OCI-LY7 (cell line): ENCODE measurements at regions of chr20 and their contacts with region 1.

Region 1: GRCh38 chr20:13119583-13119982 is 101.5 kb upstream of the ISM1 start:
- DNase-seq: peak; percentile 53
- H3K4me3 ChIP-seq: no peak overlapping the region
- H3K27ac ChIP-seq: no peak overlapping the region
- H3K4me1 ChIP-seq: no peaks in the 10 kb centered on the region
- CTCF ChIP-seq: peak; percentile 90

Region 2: DNA sequence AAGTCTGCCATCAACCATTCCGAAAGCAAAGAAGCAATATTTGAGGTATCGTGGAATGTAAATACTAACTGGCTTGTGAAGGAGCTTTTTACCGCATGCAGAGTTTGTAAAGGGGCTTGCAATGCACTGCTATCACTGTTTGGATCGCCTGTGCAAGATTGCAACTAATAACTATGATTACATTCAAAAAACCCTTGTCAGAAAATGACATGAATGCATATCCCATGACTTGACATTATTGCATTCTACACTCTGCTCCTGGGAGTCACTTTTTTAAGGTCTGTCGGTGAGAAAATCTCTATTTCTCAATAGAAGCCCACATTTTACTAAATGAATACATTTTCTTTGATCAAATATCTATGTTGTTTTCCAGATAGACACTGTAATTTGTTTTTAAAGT is 446.2 kb before region 1 on chr20:
- CTCF ChIA-PET with region 1: no interaction called
- POLR2A ChIA-PET with region 1: no interaction called
- intact Hi-C with region 1: no loop called
- DNase-seq: no peak
- H3K4me3 ChIP-seq: no peak overlapping the region
- H3K27ac ChIP-seq: no peak overlapping the region
- H3K4me1 ChIP-seq: no peaks in the 10 kb centered on the region
- CTCF ChIP-seq: no peak

Region 3: DNA sequence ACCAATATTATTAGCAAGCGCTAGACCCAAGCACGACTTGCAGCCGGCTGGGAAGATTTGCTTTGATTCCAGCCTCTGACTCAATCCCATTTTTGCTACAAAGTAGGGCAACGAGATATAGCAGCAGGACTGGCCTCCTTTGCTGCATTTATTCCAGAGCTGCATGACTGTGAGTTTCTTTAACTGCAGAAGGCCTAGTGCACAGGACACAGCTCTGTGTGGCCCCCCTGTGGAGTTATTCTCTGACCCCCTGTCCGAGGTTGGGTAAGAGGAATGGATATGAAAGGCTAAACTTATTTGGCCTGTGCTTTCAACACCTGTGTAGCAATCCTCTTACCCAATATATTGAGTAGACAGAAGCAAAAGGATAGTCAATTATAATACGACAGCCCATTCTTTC is 244.1 kb before region 1 on chr20:
- CTCF ChIA-PET with region 1: no interaction called
- POLR2A ChIA-PET with region 1: no interaction called
- intact Hi-C with region 1: no loop called
- DNase-seq: no peak
- H3K4me3 ChIP-seq: no peak overlapping the region
- H3K27ac ChIP-seq: no peak overlapping the region
- H3K4me1 ChIP-seq: no peaks in the 10 kb centered on the region
- CTCF ChIP-seq: no peak

Region 4: DNA sequence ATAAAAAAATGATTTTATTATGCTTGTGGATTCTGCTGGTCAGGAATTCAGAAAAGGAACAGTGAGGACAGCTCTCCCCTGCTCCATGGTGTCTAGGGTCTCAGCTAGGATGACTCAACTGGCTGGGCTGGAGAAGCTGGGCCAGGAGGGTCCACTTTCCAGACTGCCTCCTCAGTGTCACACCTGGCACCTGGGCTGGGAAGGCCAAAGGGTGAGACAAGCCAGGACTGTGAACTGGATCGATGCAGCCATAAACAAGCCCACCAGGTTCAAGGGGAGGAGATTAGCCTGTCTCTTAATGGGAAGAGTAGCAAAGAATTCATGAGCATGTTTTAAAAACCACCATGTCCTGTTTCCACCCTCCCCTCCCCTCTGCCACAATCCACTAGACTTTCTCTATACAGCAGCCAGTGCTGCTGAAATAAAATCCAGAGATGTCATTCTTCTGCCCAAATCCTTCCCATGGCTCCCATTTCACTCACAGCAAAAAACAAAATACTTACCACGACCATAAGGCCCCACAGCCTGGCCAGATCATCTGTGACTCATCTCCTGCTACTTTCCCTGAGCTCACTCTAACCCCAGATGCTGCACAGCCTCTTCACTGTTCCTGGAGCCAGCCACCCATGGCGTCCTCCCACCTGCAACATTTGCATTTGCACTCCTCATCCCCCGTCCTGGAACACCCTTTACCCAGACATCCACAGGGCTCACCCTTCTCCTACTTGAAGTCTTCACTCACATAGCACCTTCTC is 97.0 kb before region 1 on chr20:
- CTCF ChIA-PET with region 1: no interaction called
- POLR2A ChIA-PET with region 1: no interaction called
- intact Hi-C with region 1: no loop called
- DNase-seq: no peak
- H3K4me3 ChIP-seq: no peak overlapping the region
- H3K27ac ChIP-seq: no peak overlapping the region
- H3K4me1 ChIP-seq: peaks cover 9% of the 10 kb centered on the region
- CTCF ChIP-seq: no peak

Region 5: DNA sequence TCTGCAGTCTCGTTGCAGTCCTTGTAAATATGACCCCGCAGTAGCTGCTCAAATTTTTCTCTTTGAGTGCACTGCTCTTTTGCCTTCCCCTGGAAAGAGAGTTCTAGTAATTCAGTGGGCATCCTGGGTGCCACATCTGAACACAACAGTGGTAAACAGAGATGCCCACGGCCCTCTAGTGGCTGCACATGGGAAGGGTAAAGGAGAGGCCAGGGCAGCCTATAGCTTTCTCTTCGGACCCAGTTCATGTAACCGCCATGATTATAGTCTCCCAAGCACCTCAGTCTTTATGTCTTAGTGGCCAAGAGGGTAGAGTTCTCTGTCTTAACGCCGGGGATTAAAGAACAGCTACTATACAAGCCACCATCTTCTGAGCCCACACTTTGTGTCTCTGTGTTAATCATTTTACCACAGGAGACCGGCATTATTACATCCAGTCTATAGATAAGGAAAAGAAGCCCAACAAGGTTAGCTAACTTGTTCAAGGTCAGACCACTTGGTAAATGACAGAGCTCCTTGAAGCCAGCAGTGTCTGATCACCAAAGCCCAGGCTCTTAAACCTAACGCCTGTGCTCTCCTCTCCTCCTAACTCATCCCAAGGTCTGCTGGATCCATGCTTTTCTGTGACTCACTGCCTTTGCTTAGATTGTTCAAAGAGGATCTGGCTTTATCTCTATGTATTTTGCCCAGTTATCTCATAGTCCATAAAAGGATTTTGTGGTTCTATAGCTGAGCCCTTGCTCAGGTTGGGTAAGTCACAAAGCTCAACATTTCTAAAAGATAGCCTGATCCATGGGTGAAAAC is 183.3 kb after region 1 on chr20:
- CTCF ChIA-PET with region 1: no interaction called
- POLR2A ChIA-PET with region 1: no interaction called
- intact Hi-C with region 1: loop called (anchors 5 kb)
- DNase-seq: peak; percentile 16
- H3K4me3 ChIP-seq: no peak overlapping the region
- H3K27ac ChIP-seq: no peak overlapping the region
- H3K4me1 ChIP-seq: no peaks in the 10 kb centered on the region
- CTCF ChIP-seq: peak; percentile 72

Region 6: GRCh38 chr20:13546497-13547131 is 427.0 kb after region 1 on chr20:
- CTCF ChIA-PET with region 1: no interaction called
- POLR2A ChIA-PET with region 1: no interaction called
- intact Hi-C with region 1: loop called (anchors 5 kb)
- DNase-seq: peak; percentile 72
- H3K4me3 ChIP-seq: no peak overlapping the region
- H3K27ac ChIP-seq: no peak overlapping the region
- H3K4me1 ChIP-seq: no peaks in the 10 kb centered on the region
- CTCF ChIP-seq: peak; percentile 94

Region 7: DNA sequence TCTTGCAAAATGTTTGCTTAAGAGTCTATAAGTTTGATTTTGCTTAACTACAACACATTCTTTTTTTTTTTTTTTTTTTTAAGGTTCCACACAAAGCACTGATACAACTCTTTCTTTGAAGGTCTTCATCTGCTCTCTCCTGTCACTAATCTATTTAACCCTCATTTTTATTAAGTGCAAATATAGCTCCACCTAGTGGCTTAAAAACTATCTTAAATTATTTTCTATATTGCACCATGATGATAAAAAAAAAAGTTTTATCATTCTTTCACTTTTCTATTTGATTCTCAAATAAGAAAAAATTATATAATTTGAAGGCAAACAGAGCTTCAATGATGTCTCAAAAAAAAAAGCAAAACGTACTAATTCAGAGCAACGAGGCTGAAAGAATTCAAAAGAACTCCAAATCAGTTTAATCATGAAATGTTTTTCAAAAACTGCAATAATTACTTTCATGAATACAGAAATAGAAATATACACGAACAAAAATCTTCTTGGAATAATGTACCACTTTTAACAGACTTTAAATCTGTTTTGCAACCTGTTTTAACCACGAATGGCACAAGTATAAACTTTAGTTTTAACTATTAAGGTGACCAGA is 652.4 kb after region 1 on chr20:
- CTCF ChIA-PET with region 1: no interaction called
- POLR2A ChIA-PET with region 1: no interaction called
- intact Hi-C with region 1: loop called (anchors 5 kb)
- DNase-seq: peak; percentile 56
- H3K4me3 ChIP-seq: no peak overlapping the region
- H3K27ac ChIP-seq: no peak overlapping the region
- H3K4me1 ChIP-seq: no peaks in the 10 kb centered on the region
- CTCF ChIP-seq: peak; percentile 86

Region 8: DNA sequence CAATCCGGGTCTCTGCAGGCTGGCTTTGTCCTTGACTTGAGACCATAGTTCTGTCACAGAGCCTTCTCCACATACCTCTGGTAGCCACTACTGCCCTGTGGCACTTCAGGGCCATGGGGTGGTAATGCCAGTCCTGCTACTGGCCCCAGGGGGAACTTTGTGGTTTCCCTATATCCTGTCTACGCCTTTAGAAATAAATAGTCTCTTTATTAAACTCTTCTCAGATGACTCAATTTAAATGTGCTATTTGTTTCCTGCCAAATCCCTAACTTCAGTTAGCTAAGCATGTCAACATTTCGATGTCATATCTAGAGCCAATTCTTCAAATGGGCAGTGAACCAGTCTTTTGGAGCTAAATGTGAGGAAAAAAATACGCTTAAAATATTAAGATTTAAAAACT is 810.7 kb after region 1 on chr20:
- CTCF ChIA-PET with region 1: no interaction called
- POLR2A ChIA-PET with region 1: no interaction called
- intact Hi-C with region 1: no loop called
- DNase-seq: no peak
- H3K4me3 ChIP-seq: no peak overlapping the region
- H3K27ac ChIP-seq: no peak overlapping the region
- H3K4me1 ChIP-seq: no peaks in the 10 kb centered on the region
- CTCF ChIP-seq: no peak

Region 9: DNA sequence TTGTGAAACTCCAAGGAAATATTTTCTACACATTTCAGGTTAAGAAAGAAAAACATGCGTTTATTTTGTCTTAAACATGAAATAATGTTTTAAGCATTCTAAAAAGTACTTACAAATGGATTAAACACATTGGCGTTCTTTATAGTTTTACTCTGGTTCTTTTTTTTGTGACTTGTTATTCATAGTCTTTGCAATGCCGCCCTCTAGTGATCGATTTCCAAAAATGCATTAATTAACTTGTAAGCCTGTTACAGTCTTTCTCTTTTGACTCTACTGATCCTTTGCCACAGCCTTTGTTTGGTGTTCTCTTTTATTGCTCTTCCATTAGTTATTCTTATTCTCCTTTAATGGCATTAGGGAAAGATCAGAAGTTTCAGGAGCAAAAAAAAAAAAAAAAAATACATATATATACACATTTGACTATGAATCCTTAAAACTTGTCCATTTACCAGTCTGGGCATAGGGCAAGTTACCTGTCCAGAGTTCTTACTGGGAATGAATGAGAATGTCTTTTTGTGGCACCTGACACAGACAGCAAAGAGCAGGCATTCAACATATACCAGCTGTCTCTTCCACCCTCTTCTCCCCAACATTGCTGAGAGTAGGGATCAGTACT is 935.7 kb after region 1 on chr20:
- CTCF ChIA-PET with region 1: no interaction called
- POLR2A ChIA-PET with region 1: no interaction called
- intact Hi-C with region 1: loop called (anchors 5 kb)
- DNase-seq: peak; percentile 59
- H3K4me3 ChIP-seq: no peak overlapping the region
- H3K27ac ChIP-seq: no peak overlapping the region
- H3K4me1 ChIP-seq: no peaks in the 10 kb centered on the region
- CTCF ChIP-seq: peak; percentile 89